ENCODE measurements at regions of chr19 and their contacts with region 1.

Region 1: DNA sequence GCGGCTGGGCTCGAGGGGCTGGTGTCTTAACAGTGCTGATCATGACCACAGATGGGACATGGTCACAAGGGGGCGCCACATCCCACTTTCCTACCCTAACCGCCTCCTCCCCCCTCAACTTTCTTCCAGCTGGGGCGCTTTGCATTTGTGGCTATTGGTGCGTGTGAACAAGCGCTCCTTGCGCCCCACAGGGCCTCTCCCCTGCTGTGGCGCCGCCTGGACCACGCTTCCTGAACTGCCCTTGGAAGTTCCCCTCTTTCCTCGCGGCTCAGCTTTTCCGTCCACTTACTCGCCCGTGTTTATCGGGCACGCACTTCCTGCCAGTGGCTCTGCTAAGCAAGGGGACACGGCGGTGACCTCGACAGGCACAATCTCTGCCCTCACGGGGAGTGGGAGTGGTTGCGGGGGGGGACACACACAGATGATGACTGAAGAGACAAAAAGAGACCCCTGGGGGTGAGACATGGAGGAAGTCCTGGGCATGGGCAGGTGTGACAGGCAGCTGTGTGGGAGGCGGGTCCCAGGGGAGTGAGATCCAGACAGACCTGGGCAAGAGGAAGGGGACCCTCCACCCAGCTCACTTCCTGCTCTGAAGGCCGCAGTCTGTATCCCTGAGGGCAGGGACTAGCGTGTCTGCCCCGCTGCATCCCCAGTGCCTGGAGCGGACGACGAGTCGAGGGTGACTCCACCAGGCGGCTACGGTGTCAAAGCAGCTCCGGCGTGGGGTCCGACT is 40.3 kb downstream of the ZNF787 start:
- DNase-seq: peak; percentile 53
- H3K4me3 Mint-ChIP-seq: peak overlapping the region; percentile 49
- H3K27ac Mint-ChIP-seq: no peak overlapping the region
- H3K4me1 Mint-ChIP-seq: peaks cover 7% of the 10 kb centered on the region
- H3K27me3 Mint-ChIP-seq: no peaks in the 10 kb centered on the region

Region 2: DNA sequence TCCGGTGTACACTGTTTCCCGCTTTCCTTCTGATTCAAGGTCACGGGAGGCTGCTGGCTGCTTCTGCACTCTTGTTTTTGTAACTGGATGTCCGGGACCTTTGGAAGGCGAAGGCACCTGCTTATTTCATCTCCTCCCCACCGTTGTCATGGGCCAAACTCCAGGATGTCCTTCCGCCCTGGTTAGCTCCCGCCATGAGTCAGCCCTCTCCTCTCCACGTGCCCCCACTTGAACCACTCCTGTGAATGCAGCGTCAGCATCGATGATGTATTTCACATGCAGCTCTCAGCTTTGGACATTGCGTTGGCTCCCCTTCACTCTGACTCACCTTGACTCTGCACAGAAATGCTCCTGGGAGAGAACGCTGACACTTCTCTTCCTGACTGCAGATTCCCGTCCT is 89.4 kb after region 1 on chr19:
- intact Hi-C with region 1: loop called (anchors 2 kb)
- DNase-seq: no peak
- H3K4me3 Mint-ChIP-seq: no peak overlapping the region
- H3K27ac Mint-ChIP-seq: no peak overlapping the region
- H3K4me1 Mint-ChIP-seq: no peaks in the 10 kb centered on the region
- H3K27me3 Mint-ChIP-seq: no peaks in the 10 kb centered on the region

Region 3: GRCh38 chr19:56222901-56223300 is 142.1 kb after region 1 on chr19:
- intact Hi-C with region 1: no loop called
- DNase-seq: no peak
- H3K4me3 Mint-ChIP-seq: no peak overlapping the region
- H3K27ac Mint-ChIP-seq: no peak overlapping the region
- H3K4me1 Mint-ChIP-seq: no peaks in the 10 kb centered on the region
- H3K27me3 Mint-ChIP-seq: peaks cover 5% of the 10 kb centered on the region

Region 4: DNA sequence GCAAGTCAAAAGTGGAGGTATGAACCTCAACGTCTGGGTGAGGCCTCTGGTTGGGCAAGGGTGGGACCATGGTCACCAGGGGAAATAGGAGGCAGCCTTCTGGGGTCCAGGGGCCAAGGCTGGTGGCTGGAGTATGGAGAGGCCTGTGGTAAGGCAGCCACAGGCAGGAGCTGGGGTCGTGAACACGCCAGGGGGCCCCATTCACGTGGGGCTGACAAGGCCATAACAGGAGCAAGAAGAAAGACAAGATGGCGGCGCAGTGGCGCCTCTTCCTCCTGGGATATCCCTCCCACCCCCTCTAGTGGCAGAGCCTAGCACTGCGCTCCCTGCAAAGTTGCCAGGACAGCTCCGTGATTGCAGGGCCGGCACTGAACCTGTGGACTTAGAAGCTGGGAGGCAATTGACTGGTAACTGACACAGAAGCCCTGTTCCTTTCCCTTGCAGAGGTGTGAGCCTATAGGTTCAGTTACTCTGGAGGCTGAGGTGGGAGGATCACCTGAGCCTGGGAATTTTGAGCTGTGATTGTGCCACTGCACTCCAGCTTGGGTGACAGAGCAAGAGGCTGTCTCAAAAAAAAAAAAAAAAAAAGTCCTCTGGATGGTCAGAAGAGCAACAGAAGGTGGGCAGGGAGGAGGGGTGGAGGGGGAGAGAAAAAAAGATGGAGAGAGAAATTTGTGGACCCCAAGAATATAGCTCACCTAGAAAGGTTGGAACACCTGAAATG is 172.0 kb after region 1 on chr19:
- intact Hi-C with region 1: loop called (anchors 5 kb)
- DNase-seq: peak; percentile 53
- H3K4me3 Mint-ChIP-seq: no peak overlapping the region
- H3K27ac Mint-ChIP-seq: no peak overlapping the region
- H3K4me1 Mint-ChIP-seq: no peaks in the 10 kb centered on the region
- H3K27me3 Mint-ChIP-seq: no peaks in the 10 kb centered on the region